Activated CD8-positive, alpha-beta T cell treated with anti-CD3 and anti-CD28 coated beads for 36 hours (primary cell): ENCODE measurements at regions of chr10 and their contacts with region 1.

Region 1: DNA sequence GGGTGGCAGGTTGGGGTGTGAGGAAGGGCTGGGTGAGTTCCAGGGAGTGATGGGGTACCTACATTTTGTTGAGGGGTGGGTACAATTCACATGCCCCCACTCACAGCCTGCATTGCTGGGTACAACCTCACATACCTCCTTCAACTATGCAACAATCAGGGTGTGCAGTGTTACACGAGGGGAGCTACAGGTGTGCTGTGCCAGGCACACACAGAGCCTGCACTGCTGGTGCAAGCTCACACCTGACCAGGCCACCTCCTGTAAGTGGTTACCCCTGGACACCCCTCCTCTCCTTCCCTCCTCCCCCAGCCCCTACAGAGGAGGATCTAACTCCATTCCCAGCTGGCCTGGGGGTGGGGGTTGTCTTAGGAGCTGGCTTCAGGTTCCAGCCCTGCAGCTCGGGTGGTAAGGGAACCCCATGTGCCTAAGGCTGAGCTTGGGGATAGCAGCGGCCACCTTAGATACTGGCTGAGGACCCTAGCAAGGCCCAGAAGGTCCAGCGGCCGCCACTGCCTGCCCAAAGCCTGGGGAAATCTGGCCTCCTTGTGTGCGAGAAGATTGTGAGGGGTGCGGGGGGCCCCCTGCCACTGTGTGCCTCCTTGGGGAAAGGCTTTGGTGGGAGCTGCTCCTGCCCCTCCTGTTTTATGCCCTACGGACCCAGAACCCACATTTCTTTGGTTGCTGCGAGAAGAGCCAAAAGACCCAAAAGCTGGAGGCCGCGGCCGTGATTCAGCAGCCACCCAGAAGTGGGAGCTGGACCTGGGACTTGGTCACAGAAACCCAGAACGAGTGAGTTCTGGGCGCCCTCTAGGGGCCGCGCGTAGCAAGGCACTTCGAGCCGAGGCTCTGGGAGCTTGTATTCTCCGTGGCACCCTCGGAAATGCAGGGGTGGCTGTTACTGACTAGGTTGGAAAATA is 10.8 kb downstream of the TLX1 start:
- DNase-seq: peak; percentile 89
- ATAC-seq: peak; percentile 93
- H3K4me3 Mint-ChIP-seq: no peak overlapping the region
- H3K27ac Mint-ChIP-seq: no peak overlapping the region
- H3K4me1 Mint-ChIP-seq: peaks cover 14% of the 10 kb centered on the region
- H3K27me3 Mint-ChIP-seq: peaks cover 81% of the 10 kb centered on the region
- CTCF ChIP-seq: peak; percentile 99

Region 2: GRCh38 chr10:101042667-101043355 is 99.1 kb before region 1 on chr10:
- CTCF ChIA-PET with region 1: interaction called, 46 read pairs
- POLR2A ChIA-PET with region 1: no interaction called
- intact Hi-C with region 1: no loop called
- DNase-seq: peak; percentile 98
- ATAC-seq: peak; percentile 96
- H3K4me3 Mint-ChIP-seq: peak overlapping the region; percentile 80
- H3K27ac Mint-ChIP-seq: peak overlapping the region; percentile 81
- H3K4me1 Mint-ChIP-seq: peaks cover 21% of the 10 kb centered on the region
- H3K27me3 Mint-ChIP-seq: peaks cover 17% of the 10 kb centered on the region
- CTCF ChIP-seq: no peak

Region 3: DNA sequence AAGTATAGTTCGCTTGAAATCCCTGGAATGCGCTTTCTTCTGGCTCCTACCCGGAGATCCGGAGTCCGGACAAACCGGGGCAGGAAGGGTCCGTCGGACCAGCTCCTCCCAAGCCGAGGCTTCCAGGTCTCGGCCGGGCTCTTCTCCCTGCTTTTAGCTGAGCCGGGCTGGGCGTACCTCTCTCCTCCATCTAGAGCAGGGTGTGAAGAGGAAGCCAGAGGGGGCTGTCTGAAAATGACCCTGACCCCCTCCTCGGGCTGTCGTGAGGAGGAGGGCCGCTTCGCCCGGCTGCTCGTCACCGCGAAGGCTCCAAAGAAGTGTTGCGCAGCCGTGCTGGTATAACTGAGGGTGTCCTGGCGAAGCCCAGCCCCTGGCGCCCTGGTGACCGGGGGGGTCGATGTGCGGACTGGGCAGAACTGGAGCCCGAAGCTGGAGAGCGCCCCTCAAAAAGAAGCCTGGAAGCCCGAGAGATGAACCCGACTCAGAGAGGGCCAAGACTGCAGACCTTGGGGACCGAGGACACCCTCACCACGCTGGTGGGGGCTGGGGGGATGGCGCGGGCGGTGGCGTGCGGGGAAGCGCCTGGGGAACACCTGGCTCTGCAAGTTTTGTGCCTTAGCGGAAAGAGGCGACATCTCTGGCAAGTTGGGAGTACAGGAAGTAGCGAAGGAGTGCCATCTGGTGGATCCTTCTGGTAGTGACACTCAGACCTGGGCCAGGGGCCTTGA is 74.4 kb before region 1 on chr10:
- CTCF ChIA-PET with region 1: interaction called, 62 read pairs
- POLR2A ChIA-PET with region 1: interaction called, 5 read pairs
- intact Hi-C with region 1: no loop called
- DNase-seq: peak; percentile 88
- ATAC-seq: peak; percentile 77
- H3K4me3 Mint-ChIP-seq: peak overlapping the region; percentile 74
- H3K27ac Mint-ChIP-seq: no peak overlapping the region
- H3K4me1 Mint-ChIP-seq: peaks cover 22% of the 10 kb centered on the region
- H3K27me3 Mint-ChIP-seq: peaks cover 52% of the 10 kb centered on the region
- CTCF ChIP-seq: peak; percentile 88

Region 4: DNA sequence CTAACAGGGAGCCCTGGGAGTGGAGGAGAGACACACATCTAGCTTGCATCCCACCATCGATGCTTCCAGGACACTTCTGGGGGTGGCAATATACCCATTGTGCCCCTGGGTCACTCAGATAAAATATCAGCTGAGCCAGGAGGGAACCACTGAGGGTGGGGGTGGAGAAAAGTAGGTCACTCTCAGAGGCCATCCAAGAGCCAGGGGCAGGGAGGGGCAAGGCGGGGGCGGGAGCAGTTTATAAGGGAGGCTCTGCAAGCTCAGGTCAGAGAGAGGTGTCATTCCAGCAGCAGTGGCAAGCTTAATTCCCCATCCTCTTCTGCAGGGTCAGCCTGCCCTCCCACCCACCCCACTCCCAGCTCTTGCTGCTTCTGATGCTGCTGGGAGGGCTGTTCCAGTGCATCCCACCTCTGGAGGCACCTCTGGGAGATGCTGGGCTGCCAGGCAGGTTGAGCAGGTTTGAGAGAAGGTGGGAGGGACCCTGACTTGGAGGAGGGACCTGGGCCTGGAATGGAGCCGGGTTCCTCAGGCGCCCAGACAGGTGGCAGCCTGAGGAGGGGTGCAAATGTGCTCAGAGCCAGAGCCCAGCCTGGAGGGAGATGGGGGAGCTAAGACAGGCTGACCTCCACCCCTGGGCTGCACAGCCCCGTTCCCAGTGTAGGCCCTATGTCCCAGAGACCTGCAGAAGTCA is 30.9 kb before region 1 on chr10:
- CTCF ChIA-PET with region 1: interaction called, 25 read pairs
- POLR2A ChIA-PET with region 1: no interaction called
- intact Hi-C with region 1: no loop called
- DNase-seq: no peak
- ATAC-seq: no peak
- H3K4me3 Mint-ChIP-seq: no peak overlapping the region
- H3K27ac Mint-ChIP-seq: no peak overlapping the region
- H3K4me1 Mint-ChIP-seq: no peaks in the 10 kb centered on the region
- H3K27me3 Mint-ChIP-seq: peaks cover 27% of the 10 kb centered on the region
- CTCF ChIP-seq: no peak

Region 5: GRCh38 chr10:101152316-101152715 is 10.4 kb after region 1 on chr10:
- CTCF ChIA-PET with region 1: interaction called, 93 read pairs
- POLR2A ChIA-PET with region 1: no interaction called
- intact Hi-C with region 1: no loop called
- DNase-seq: no peak
- ATAC-seq: no peak
- H3K4me3 Mint-ChIP-seq: no peak overlapping the region
- H3K27ac Mint-ChIP-seq: no peak overlapping the region
- H3K4me1 Mint-ChIP-seq: no peaks in the 10 kb centered on the region
- H3K27me3 Mint-ChIP-seq: peaks cover 48% of the 10 kb centered on the region
- CTCF ChIP-seq: no peak